ENCODE measurements at regions of chr6 and their contacts with region 1.

Region 1: GRCh38 chr6:123316733-123317323 is 319.9 kb downstream of the TRDN start:
- DNase-seq: peak; percentile 47
- ATAC-seq: no peak
- H3K4me3 ChIP-seq: no peak overlapping the region
- H3K27ac ChIP-seq: no peak overlapping the region
- H3K4me1 ChIP-seq: no peaks in the 10 kb centered on the region
- H3K27me3 ChIP-seq: peaks cover 7% of the 10 kb centered on the region; the same call in 1 of the 2 replicates
- CTCF ChIP-seq: no peak; the same call in 1 of the 2 replicates

Region 2: GRCh38 chr6:122869437-122870024 is 447.3 kb before region 1 on chr6:
- CTCF ChIA-PET with region 1: no interaction called
- POLR2A ChIA-PET with region 1: no interaction called
- intact Hi-C with region 1: loop called (anchors 1 kb)
- DNase-seq: peak; percentile 57
- ATAC-seq: peak; percentile 95
- H3K4me3 ChIP-seq: no peak overlapping the region
- H3K27ac ChIP-seq: no peak overlapping the region
- H3K4me1 ChIP-seq: peaks cover 9% of the 10 kb centered on the region
- H3K27me3 ChIP-seq: peaks cover 7% of the 10 kb centered on the region; the same call in 1 of the 2 replicates
- CTCF ChIP-seq: peak; percentile 75

Region 3: DNA sequence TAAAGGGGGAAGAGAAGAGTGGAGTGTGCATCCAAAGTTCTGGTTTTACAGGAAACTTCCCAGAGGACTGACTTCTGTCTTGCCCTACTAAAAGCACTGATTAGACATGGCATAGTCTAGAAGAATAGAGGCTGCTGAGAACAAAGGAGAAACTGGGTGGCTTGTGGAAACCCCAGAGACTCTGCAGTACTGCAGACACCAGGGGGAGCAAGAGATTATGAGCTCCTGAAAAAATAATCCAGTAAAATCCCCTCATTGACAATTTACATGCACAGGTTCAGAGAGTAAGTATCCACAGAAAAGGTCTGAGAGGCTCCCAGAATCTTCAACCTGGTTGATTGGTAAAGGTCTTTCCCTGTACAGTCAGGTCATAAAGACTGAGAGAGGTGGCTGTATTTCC is 369.5 kb before region 1 on chr6:
- CTCF ChIA-PET with region 1: no interaction called
- POLR2A ChIA-PET with region 1: no interaction called
- intact Hi-C with region 1: loop called (anchors 1 kb)
- DNase-seq: peak; percentile 24
- ATAC-seq: no peak
- H3K4me3 ChIP-seq: no peak overlapping the region
- H3K27ac ChIP-seq: no peak overlapping the region
- H3K4me1 ChIP-seq: no peaks in the 10 kb centered on the region
- H3K27me3 ChIP-seq: no peaks in the 10 kb centered on the region
- CTCF ChIP-seq: peak; percentile 65

Region 4: GRCh38 chr6:123306334-123306733 is 10.5 kb before region 1 on chr6:
- CTCF ChIA-PET with region 1: no interaction called
- POLR2A ChIA-PET with region 1: no interaction called
- intact Hi-C with region 1: no loop called
- DNase-seq: no peak
- ATAC-seq: no peak
- H3K4me3 ChIP-seq: no peak overlapping the region
- H3K27ac ChIP-seq: no peak overlapping the region
- H3K4me1 ChIP-seq: no peaks in the 10 kb centered on the region
- H3K27me3 ChIP-seq: no peaks in the 10 kb centered on the region
- CTCF ChIP-seq: no peak

Measured in PC-3 (cell line).